Ovary (tissue), 10 donors: ENCODE measurements at regions of chr15 and their contacts with region 1.

Region 1: GRCh38 chr15:90221246-90221900 is 12.4 kb downstream of the CIB1 start:
- DNase-seq: peak; percentile 76 to 87 (median 84)
- H3K4me3 ChIP-seq: no peak overlapping the region
- H3K27ac ChIP-seq: peak overlapping the region in 1 of 2 donors; percentile 39
- H3K4me1 ChIP-seq: no peaks in the 10 kb centered on the region
- H3K27me3 ChIP-seq: no peaks in the 10 kb centered on the region
- CTCF ChIP-seq: peak; percentile 48 to 82 (median 56)
- EP300 ChIP-seq: no peak
- POLR2A ChIP-seq: no peak

Region 2: GRCh38 chr15:90086868-90087268 is 134.5 kb before region 1 on chr15:
- intact Hi-C with region 1: loop called in 1 of 4 experiments (anchors 10 kb)
- DNase-seq: peak in 2 of 5 donors; percentile 55 to 62
- H3K4me3 ChIP-seq: no peak overlapping the region
- H3K27ac ChIP-seq: no peak overlapping the region
- H3K4me1 ChIP-seq: peaks cover 4% of the 10 kb centered on the region
- H3K27me3 ChIP-seq: no peaks in the 10 kb centered on the region
- CTCF ChIP-seq: peak in 2 of 3 donors; percentile 20 to 35
- EP300 ChIP-seq: no peak
- POLR2A ChIP-seq: no peak